Naive thymus-derived CD4-positive, alpha-beta T cell (primary cell): ENCODE measurements at regions of chr17 and their contacts with region 1.

Region 1: GRCh38 chr17:30378824-30379302 is at the start of gene CPD:
- DNase-seq: peak; percentile 93 to 99 (median 97)
- ATAC-seq: peak; percentile 98
- H3K4me3 ChIP-seq: peak within 1 kb of the TSS; percentile 76
- H3K4me3 Mint-ChIP-seq: peak within 1 kb of the TSS; percentile 90 to 99 (median 94)
- H3K27ac ChIP-seq: peak within 1 kb of the TSS; percentile 81
- H3K27ac Mint-ChIP-seq: peak within 1 kb of the TSS; percentile 89 to 98 (median 94)
- H3K4me1 ChIP-seq: peaks cover 20 to 50% of the 10 kb centered on the region in 2 donors
- H3K4me1 Mint-ChIP-seq: peaks cover 36 to 65% (median 55%) of the 10 kb centered on the region in 7 donors
- H3K27me3 ChIP-seq: no peaks in the 10 kb centered on the region
- H3K27me3 Mint-ChIP-seq: no peaks in the 10 kb centered on the region
- total RNA-seq, gene CPD: 16.5 to 52.9 (median 22.6) TPM

Region 2: GRCh38 chr17:29495011-29495410 is 883.9 kb before region 1 on chr17:
- CTCF ChIA-PET with region 1: no interaction called
- POLR2A ChIA-PET with region 1: no interaction called
- intact Hi-C with region 1: no loop called
- DNase-seq: no peak
- ATAC-seq: no peak
- H3K4me3 ChIP-seq: no peak overlapping the region
- H3K4me3 Mint-ChIP-seq: no peak overlapping the region
- H3K27ac ChIP-seq: no peak overlapping the region
- H3K27ac Mint-ChIP-seq: no peak overlapping the region
- H3K4me1 ChIP-seq: no peaks in the 10 kb centered on the region
- H3K4me1 Mint-ChIP-seq: peaks cover 0 to 5% (median 3%) of the 10 kb centered on the region in 7 donors
- H3K27me3 ChIP-seq: no peaks in the 10 kb centered on the region
- H3K27me3 Mint-ChIP-seq: no peaks in the 10 kb centered on the region

Region 3: GRCh38 chr17:30031214-30031869 is 347.5 kb before region 1 on chr17:
- CTCF ChIA-PET with region 1: no interaction called
- POLR2A ChIA-PET with region 1: no interaction called
- intact Hi-C with region 1: no loop called
- DNase-seq: peak in 4 of 9 donors; percentile 1 to 9 (median 5)
- ATAC-seq: peak; percentile 49
- H3K4me3 ChIP-seq: no peak overlapping the region
- H3K4me3 Mint-ChIP-seq: no peak overlapping the region
- H3K27ac ChIP-seq: no peak overlapping the region
- H3K27ac Mint-ChIP-seq: no peak overlapping the region
- H3K4me1 ChIP-seq: no peaks in the 10 kb centered on the region
- H3K4me1 Mint-ChIP-seq: no peaks in the 10 kb centered on the region
- H3K27me3 ChIP-seq: no peaks in the 10 kb centered on the region
- H3K27me3 Mint-ChIP-seq: peaks cover 0 to 25% (median 0%) of the 10 kb centered on the region in 5 donors

Region 4: DNA sequence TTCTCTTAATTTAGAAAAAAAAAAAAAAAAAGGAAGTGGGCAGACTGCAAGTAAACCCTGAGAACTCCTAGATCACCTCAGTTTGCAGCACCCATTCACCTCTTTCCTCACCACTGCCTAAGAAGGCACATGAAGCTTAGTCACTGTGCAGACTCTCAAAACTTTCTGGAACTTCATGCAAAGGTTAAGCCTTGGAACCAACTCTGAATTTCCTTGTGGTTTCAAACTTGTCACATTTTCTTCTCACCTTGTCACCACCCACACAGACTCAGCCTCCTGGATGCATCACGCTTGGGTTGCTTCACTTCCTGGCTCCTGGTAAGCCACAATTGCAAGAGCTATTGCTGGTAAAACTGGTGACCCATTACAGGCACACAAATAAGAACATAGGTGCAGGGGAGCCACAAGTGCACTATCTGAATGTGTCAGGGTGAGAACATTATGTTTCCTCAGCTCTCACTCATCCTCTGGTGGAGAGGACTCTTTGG is 15.1 kb before region 1 on chr17:
- CTCF ChIA-PET with region 1: no interaction called
- POLR2A ChIA-PET with region 1: interaction called, 5 read pairs
- intact Hi-C with region 1: loop called (anchors 1 kb)
- DNase-seq: peak in 8 of 9 donors; percentile 34 to 78 (median 57)
- ATAC-seq: peak; percentile 88
- H3K4me3 ChIP-seq: no peak overlapping the region
- H3K4me3 Mint-ChIP-seq: peak overlapping the region; percentile 29 to 82 (median 64)
- H3K27ac ChIP-seq: peak overlapping the region; percentile 25
- H3K27ac Mint-ChIP-seq: peak overlapping the region; percentile 8 to 89 (median 84)
- H3K4me1 ChIP-seq: peaks cover 18 to 21% of the 10 kb centered on the region in 2 donors
- H3K4me1 Mint-ChIP-seq: peaks cover 6 to 32% (median 25%) of the 10 kb centered on the region in 7 donors
- H3K27me3 ChIP-seq: no peaks in the 10 kb centered on the region
- H3K27me3 Mint-ChIP-seq: no peaks in the 10 kb centered on the region

Region 5: GRCh38 chr17:30433514-30433913 is 54.7 kb after region 1 on chr17:
- CTCF ChIA-PET with region 1: no interaction called
- POLR2A ChIA-PET with region 1: no interaction called
- intact Hi-C with region 1: no loop called
- DNase-seq: no peak
- ATAC-seq: no peak
- H3K4me3 ChIP-seq: no peak overlapping the region
- H3K4me3 Mint-ChIP-seq: no peak overlapping the region
- H3K27ac ChIP-seq: no peak overlapping the region
- H3K27ac Mint-ChIP-seq: peak overlapping the region in 1 of 9 donors; percentile 10
- H3K4me1 ChIP-seq: no peaks in the 10 kb centered on the region
- H3K4me1 Mint-ChIP-seq: peaks cover 0 to 4% (median 0%) of the 10 kb centered on the region in 7 donors
- H3K27me3 ChIP-seq: no peaks in the 10 kb centered on the region
- H3K27me3 Mint-ChIP-seq: no peaks in the 10 kb centered on the region